Activated CD8-positive, alpha-beta T cell treated with anti-CD3 and anti-CD28 coated beads for 36 hours (primary cell): ENCODE measurements at regions of chr15 and their contacts with region 1.

Region 1: DNA sequence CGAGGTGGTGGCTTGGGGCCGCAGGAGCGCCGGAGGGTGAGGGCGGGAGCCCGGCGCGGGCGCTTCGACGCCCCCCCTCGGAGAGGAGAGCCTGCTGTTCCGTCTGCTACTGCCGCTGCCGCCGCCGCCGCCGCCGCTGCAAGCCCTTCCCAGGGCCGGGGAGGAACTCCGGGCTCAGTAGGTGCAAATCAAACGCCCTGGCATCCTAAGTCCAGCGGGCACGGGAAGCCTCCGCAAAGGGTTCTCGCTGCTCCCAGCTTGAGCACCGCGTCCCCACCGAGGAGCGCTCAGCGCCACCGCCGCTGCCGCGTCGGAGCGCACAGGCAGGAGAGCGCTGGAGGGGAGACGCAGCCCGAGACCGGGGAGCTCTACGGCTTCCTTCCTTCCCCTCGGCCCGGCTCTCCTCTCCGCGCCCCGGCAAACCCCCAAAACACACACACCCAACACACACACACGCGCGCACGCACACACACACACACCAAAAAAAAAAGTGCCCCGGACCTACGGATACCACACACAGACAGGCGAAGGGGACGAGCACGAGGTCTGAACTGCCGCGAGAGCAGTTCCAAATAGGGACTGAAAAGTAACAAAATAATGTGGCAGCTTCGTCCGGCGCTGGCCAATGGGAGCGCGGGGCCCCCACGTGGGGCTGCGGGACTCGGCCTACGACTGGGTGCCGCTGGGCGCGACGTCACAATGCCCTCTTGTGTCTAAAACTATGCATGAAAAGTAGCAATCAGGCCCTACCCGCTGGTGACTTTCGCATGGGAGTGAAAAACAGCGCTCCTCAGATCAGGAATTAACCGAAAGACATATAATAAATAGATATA is at the start of gene TLE3:
- DNase-seq: peak; percentile 99
- ATAC-seq: peak; percentile 60
- H3K4me3 Mint-ChIP-seq: peak within 1 kb of the TSS; percentile 92
- H3K27ac Mint-ChIP-seq: peak within 1 kb of the TSS; percentile 100
- H3K4me1 Mint-ChIP-seq: peaks cover 29% of the 10 kb centered on the region
- H3K27me3 Mint-ChIP-seq: peaks cover 5% of the 10 kb centered on the region
- CTCF ChIP-seq: peak; percentile 20
- total RNA-seq, gene TLE3: 48.4 to 64.2 TPM

Region 2: DNA sequence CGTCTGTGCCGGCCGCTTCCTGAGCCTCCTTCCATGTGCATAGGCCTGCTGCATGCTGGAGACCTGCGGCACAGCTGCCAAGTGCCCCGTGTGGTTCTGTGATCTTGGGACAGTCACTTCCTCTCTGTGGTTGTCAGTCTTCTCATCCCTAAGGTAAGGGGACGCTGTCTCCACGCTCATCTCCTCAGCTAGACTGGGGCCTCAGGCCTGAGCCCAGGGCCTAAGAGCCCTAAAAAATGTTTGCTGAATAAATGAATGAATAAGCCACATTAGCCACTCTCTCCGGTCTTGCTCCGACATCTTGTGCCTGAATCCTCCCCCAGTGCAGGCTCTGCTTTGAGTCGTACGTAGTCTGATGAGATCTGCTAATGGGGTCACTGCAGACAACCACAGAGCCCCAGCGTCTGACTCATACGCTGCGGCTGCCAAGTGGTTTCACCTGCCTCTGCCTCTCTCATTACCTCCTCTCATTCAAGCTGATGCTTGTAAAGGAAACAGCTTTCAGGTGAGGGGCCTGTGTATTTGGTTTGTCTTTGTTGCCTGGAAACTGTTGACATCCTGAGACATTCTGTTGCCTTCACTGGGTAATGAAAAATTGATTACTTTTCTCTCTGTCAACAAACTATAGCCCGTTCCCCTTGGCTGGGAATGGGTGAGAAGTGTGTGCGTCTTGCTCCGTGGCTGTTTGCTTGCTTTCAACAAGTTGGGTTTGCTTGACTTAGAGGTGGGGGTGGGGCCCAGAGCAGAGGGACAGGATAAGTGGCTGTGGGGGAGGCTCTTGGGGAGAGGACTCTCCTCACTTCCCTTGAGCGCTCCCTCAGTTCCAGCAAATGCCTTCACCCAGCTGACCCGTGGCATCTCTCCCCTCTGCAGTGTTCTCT is 629.1 kb before region 1 on chr15:
- CTCF ChIA-PET with region 1: interaction called, 3 read pairs
- POLR2A ChIA-PET with region 1: interaction called, 5 read pairs
- intact Hi-C with region 1: loop called (anchors 5 kb)
- DNase-seq: peak; percentile 95
- ATAC-seq: peak; percentile 95
- H3K4me3 Mint-ChIP-seq: peak overlapping the region; percentile 50
- H3K27ac Mint-ChIP-seq: peak overlapping the region; percentile 91
- H3K4me1 Mint-ChIP-seq: peaks cover 34% of the 10 kb centered on the region
- H3K27me3 Mint-ChIP-seq: peaks cover 3% of the 10 kb centered on the region
- CTCF ChIP-seq: no peak

Region 3: DNA sequence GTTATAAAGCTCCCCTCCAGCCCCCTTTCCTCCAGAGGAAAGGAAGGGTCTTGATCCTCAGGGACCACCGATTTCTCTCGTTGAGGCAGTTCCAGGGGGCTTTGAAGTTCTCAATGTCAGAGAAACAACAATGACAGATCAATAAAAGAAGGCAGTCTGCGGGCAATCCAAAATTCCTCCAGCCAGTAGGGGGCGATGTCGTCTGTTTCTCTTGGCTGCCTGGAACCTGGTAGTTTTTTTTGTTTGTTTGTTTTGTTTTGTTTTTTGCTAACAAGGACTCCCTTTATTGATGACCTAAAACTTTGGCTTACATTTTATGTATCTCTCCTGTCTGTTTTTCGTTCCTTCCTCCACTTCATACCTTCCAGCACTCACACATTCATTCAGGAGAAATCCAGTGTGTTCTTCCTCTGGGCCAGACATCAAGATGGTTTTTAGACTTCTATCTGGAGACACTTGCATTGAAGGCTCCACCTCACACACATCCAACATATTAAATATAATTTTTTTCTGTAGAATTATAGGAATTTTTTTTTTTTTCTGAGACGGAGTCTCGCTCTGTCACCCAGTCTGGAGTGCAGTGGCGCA is 368.3 kb before region 1 on chr15:
- CTCF ChIA-PET with region 1: interaction called, 5 read pairs
- POLR2A ChIA-PET with region 1: interaction called, 3 read pairs
- intact Hi-C with region 1: loop called (anchors 10 kb)
- DNase-seq: peak; percentile 85
- ATAC-seq: no peak
- H3K4me3 Mint-ChIP-seq: no peak overlapping the region
- H3K27ac Mint-ChIP-seq: no peak overlapping the region
- H3K4me1 Mint-ChIP-seq: peaks cover 21% of the 10 kb centered on the region
- H3K27me3 Mint-ChIP-seq: peaks cover 6% of the 10 kb centered on the region
- CTCF ChIP-seq: peak; percentile 75

Region 4: DNA sequence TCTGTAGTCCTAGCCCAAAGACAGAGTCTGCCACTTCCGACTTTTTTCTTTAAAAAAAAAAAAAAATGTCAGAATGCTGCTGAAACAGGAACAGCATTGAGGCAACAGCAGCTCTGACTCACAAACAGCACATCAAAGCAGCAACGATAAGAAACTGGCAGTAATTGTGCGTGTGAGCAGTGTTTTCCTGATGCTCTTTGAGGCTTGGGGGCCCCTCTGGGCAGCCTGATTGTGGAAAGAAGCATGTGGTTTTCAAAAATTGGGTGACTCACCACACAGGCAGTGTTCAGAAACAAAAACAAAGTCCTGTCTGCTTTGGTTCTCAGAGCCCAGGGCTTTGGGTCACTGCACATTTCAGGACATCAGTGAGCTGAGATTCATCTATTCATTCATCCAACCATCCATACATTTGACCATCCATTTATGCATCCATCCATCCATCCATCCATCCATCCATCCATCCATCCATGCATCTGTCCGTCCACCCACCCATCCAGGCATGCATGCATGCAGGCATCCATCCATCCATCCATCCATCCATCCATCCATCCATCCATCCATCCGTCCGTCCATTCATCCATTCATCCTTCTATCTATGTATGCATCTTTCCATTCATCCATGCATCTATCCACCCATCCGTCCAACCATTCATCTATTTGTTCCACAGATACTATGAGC is 336.5 kb before region 1 on chr15:
- CTCF ChIA-PET with region 1: interaction called, 4 read pairs
- POLR2A ChIA-PET with region 1: interaction called, 34 read pairs
- intact Hi-C with region 1: loop called (anchors 5 kb)
- DNase-seq: peak; percentile 92
- ATAC-seq: peak; percentile 50
- H3K4me3 Mint-ChIP-seq: peak overlapping the region; percentile 16
- H3K27ac Mint-ChIP-seq: peak overlapping the region; percentile 83
- H3K4me1 Mint-ChIP-seq: peaks cover 68% of the 10 kb centered on the region
- H3K27me3 Mint-ChIP-seq: peaks cover 1% of the 10 kb centered on the region
- CTCF ChIP-seq: no peak

Region 5: DNA sequence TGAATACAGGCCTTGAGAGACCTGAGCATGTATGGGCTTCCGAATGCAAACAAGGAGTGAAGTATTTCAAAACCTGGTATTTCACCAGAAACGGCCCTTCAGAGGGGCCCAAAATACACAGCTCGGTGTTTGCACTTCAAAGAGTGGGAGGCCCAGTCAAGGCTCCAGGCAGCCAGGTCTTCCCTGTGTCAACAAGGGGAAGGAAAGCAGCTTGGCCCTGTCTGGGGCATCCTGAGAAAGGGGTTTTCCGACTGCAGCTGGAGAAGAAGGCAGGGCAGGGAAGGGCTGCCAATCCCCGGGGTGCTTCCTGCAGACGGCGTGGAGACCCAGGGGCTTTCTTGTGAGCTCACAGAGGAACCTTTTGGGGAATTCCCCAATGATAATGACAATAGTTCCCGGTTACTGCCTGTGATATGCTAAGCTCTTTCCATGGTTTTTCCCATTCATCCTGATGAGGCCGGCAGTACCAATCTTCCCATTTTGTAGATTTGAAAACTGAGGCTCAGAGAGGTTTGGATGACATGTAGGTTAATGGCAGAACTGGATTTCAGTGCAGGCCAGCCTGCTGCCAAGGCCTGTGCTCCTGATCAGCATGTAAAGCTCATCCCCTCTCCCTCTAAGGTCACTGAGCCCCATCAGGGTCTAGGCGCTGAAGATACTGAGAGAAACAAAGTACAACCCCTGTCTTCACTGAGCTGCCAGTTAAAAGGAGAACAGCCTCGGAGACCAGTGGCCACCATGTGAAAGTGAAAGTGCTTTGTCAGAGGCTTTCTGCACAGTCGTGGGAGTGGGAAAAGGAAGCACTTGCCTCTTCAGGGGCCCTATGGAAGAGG is 43.2 kb after region 1 on chr15:
- CTCF ChIA-PET with region 1: interaction called, 13 read pairs
- POLR2A ChIA-PET with region 1: interaction called, 16 read pairs
- intact Hi-C with region 1: no loop called
- DNase-seq: peak; percentile 41
- ATAC-seq: peak; percentile 12
- H3K4me3 Mint-ChIP-seq: no peak overlapping the region
- H3K27ac Mint-ChIP-seq: no peak overlapping the region
- H3K4me1 Mint-ChIP-seq: peaks cover 33% of the 10 kb centered on the region
- H3K27me3 Mint-ChIP-seq: peaks cover 12% of the 10 kb centered on the region
- CTCF ChIP-seq: no peak

Region 6: GRCh38 chr15:70488002-70488605 is 390.6 kb after region 1 on chr15:
- CTCF ChIA-PET with region 1: interaction called, 10 read pairs
- POLR2A ChIA-PET with region 1: no interaction called
- intact Hi-C with region 1: loop called (anchors 5 kb)
- DNase-seq: peak; percentile 82
- ATAC-seq: no peak
- H3K4me3 Mint-ChIP-seq: no peak overlapping the region
- H3K27ac Mint-ChIP-seq: no peak overlapping the region
- H3K4me1 Mint-ChIP-seq: peaks cover 59% of the 10 kb centered on the region
- H3K27me3 Mint-ChIP-seq: peaks cover 31% of the 10 kb centered on the region
- CTCF ChIP-seq: peak; percentile 92